HEK293T (cell line): ENCODE measurements at regions of chr11 and their contacts with region 1.

Region 1: GRCh38 chr11:33808228-33808828 is 34.0 kb upstream of the FBXO3 start:
- DNase-seq: peak; percentile 83

Region 2: GRCh38 chr11:33747979-33748378 is 60.3 kb before region 1 on chr11:
- CTCF ChIA-PET with region 1: no interaction called
- POLR2A ChIA-PET with region 1: no interaction called
- DNase-seq: no peak

Region 3: DNA sequence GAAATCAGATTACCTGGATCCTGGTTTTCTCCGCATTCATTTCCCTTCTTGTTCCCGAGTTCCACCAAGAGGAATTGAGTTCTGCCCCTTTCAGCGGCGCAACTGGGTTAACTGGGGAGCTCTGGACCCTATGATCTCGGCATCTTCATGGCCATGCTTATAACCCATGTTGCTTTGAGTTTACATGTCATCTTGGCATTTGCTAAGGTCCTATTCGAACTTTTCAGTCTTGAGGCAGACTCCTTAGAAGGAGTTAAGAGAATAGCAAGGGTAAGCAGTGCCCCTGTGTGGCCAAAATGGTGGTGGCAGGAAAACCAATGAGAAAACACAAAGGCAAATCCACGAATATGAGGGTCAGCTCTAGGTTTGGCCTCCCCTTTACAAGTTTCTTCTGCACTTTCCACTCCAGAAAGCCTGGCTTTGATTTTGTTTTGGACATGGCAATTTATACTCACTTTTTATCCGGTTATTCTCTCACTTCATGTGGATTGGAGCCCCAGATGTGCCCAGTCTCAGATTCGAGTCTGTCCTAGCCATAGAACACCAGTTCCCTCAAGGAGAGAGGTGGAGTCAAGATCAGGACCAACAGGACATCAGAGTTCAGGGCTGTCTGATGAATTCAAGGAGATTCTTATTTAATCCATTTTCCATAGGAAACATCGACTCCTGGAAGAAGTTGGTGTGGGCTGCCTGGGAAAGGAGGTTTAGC is 21.3 kb after region 1 on chr11:
- CTCF ChIA-PET with region 1: interaction called, 57 read pairs
- POLR2A ChIA-PET with region 1: no interaction called
- DNase-seq: peak; percentile 67